MCF 10A (cell line): ENCODE measurements at regions of chr4 and their contacts with region 1.

Region 1: GRCh38 chr4:1726146-1726934 is 5.0 kb downstream of the TACC3 start:
- DNase-seq: peak; percentile 87
- H3K4me3 Mint-ChIP-seq: peak overlapping the region; percentile 67
- H3K27ac Mint-ChIP-seq: peak overlapping the region; percentile 94
- H3K4me1 Mint-ChIP-seq: peaks cover 58% of the 10 kb centered on the region
- H3K27me3 Mint-ChIP-seq: no peaks in the 10 kb centered on the region
- CTCF ChIP-seq: peak; percentile 94

Region 2: DNA sequence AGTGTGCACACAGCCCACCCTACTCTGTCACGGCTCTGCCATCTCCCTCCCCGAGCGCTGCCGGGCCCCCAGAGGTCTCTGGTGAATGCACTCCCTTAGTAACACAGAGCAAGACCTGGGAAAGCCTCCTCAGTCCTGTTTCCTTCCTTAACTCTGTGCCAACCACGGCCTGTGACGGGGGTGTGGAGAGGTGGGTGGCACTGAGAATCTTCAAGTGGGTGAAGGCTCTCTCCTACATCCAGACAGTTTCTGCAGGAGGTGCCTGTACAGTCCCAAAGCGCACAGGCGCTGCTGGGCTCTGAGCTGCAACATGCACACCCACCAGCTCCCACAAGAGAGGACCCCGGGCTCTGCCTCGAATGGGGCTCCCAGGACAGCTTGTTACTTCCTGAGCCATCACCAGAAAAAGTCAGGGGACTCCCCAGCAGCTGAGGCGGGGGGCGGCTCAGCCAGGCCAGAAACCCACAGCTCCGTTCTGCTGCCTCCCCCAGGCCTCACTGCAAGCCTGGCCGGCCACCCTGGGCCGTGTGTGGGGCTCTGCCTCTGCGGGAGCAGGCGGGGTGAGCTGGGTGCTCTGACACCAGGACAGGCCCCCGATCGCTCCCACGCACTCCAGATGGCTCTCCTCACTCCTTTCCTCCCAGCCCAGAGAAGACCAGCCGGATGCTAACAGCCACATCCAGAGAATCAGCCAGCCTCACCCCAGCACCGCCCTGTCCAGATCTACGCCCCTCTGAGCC is 72.0 kb before region 1 on chr4:
- CTCF ChIA-PET with region 1: no interaction called
- POLR2A ChIA-PET with region 1: no interaction called
- intact Hi-C with region 1: no loop called
- DNase-seq: no peak
- H3K4me3 Mint-ChIP-seq: no peak overlapping the region
- H3K27ac Mint-ChIP-seq: no peak overlapping the region
- H3K4me1 Mint-ChIP-seq: no peaks in the 10 kb centered on the region
- H3K27me3 Mint-ChIP-seq: no peaks in the 10 kb centered on the region
- CTCF ChIP-seq: no peak

Region 3: DNA sequence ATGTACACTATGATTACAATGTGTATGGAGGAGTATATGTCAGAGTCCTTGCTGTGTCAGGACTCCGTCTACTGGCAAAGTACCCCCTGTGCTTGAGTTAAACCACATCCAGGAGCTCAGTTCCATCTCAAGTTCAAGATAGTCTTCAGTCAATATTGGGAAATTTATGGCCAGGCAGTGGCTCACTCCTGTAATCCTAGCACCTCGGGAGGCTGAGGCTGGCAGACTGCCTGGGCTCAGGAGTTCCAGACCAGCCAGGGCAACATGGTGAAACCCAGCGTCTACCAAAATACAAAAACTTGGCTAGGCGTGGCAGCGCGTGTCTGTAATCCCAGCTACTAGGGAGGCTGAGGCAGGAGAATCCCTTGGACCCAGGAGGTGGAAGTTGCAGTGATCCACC is 20.0 kb before region 1 on chr4:
- CTCF ChIA-PET with region 1: interaction called, 15 read pairs
- POLR2A ChIA-PET with region 1: interaction called, 63 read pairs
- intact Hi-C with region 1: no loop called
- DNase-seq: no peak
- H3K4me3 Mint-ChIP-seq: no peak overlapping the region
- H3K27ac Mint-ChIP-seq: no peak overlapping the region
- H3K4me1 Mint-ChIP-seq: peaks cover 7% of the 10 kb centered on the region
- H3K27me3 Mint-ChIP-seq: no peaks in the 10 kb centered on the region
- CTCF ChIP-seq: no peak

Region 4: DNA sequence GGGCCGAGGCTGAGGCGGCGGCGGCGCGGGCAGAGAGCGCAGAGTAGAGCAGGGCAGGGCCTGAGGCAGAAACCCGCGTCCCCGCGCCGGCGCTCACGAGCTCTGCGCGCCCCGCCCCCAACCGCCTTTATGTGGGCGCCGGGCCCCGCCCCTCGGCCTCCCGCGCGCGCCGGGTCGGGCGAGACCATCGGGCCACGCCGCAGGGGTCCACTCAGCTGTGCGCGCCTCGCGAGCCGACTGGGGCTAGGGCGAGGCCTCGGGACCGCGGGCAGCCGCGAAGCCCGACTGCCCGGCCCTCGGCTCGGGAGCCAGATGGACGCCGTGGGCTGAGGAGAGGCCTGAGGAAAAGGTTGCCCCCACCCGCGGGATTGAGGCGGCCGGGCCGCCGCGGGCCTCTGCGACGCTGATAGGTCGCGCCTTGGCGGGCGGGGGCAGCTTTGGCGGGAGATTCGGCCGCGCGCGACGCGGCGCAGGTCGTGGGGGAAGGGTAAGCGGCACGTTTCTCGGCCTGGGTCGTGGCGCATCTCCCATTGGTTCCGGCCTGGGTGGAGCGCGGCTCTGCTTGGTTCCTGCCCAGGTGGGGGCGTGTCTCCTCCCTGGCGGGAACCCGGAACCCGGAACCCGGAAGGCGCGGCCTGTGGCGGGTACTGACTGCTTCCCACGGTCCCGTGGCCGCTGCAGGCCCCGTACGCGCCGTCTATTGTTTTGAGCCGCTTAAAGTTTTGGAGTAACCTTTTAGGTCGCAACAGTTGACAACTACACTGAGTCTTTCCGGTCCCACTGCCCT is 13.9 kb before region 1 on chr4 and contains the start of gene SLBP:
- CTCF ChIA-PET with region 1: interaction called, 15 read pairs
- POLR2A ChIA-PET with region 1: interaction called, 63 read pairs
- intact Hi-C with region 1: loop called (anchors 2 kb)
- DNase-seq: peak; percentile 96
- H3K4me3 Mint-ChIP-seq: peak within 1 kb of the TSS; percentile 86
- H3K27ac Mint-ChIP-seq: peak within 1 kb of the TSS; percentile 96
- H3K4me1 Mint-ChIP-seq: peaks cover 7% of the 10 kb centered on the region
- H3K27me3 Mint-ChIP-seq: no peaks in the 10 kb centered on the region
- CTCF ChIP-seq: no peak
- total RNA-seq, gene SLBP: 37.1 and 43.5 TPM in 2 replicates